ENCODE measurements at regions of chr20 and their contacts with region 1.

Region 1: DNA sequence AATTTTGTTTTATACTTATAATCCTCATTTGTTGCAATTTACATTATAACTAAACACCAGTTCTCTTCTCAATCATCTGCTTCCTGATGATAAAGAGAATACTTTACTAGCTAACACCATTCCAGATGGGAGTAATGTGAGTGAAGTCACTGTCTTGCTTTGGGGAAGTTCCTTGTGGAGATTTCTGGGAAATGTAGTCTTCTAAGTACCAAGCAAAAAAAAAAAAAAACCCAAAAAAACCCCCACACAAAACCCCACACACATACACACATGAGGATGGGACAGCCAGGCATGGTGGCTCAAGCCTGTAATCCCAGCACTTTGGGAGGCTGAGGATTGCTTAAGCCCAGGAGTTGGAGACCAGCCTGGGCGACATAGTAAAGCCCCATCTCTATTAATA is 2.2 kb upstream of the SNPH start:
- DNase-seq: no peak
- ATAC-seq: no peak

Region 2: DNA sequence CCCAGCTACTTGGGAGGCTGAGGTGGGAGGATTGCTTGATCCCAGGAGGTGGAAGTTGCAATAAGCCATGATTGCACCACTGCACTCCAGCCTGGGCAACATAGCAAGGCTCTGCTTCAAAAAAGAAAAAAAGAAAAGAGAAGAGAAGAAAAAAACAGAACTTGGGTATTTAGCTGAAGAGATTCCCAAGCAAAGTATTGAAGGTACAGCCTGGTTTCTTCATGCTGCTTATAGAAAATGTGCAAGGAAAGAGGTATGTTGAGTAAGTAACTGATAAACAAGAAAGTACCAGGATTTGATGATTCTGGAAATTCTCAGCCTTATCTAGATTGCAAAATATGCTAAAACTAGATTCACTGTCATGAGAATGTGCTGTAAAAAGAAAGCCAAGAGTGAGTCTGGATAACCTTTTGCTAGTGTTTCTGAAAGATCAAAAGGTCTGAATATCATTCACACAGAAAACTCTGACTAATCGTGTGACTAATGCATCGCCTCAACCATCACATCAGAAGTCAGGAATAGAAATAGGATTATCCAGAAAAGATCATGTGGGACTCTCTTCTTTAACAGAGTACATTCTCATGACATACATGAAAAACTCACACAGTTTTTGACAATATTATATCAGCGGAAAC is 1356.2 kb after region 1 on chr20:
- intact Hi-C with region 1: loop called (anchors 5 kb)
- DNase-seq: no peak
- ATAC-seq: no peak

Measured in sciatic nerve (tissue), 2 donors.